ENCODE measurements at regions of chr6 and their contacts with region 1.

Region 1: DNA sequence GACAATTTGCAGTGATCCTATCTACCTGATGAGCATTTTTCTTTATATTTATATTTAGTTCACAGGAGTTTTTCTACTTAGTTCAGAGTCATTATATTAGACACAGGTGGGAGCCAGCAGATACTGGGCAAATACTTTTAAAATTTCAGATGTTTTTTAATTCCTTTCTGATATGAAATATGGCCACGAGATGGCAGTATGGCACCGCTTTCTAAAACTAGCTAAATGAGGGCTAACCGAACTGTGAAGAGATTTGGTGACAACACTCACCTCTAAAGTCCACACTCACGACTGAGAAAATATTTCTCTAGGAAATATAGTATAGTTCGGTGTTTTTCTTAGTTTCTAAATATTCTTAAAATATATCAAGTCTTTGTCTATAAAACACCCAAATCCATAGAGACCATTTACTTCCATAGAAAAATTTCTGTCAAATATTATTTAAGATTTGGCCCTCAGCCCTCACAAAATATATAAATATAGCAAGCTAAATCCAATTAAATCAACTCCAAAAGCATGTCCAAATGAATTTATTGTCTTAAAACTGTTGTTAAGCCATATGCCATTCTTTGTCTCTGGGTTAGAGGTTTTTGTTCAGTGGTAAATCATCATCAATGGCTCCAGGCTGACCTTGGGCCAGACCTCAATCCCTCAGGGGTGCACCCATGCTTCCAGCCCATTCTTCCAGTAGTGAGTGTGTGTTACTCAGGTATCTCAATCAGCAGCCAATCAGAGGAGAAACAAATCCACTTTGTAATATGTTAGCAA is 63.6 kb downstream of the HUS1B start:
- DNase-seq: no peak
- H3K4me3 ChIP-seq: no peak overlapping the region
- H3K27ac ChIP-seq: peak overlapping the region; percentile 58 to 66 (median 64)
- H3K4me1 ChIP-seq: peaks cover 0 to 9% (median 0%) of the 10 kb centered on the region in 4 donors
- H3K27me3 ChIP-seq: no peaks in the 10 kb centered on the region
- CTCF ChIP-seq: peak in 3 of 4 experiments; percentile 54 to 69 (median 63)
- EP300 ChIP-seq: no peak
- POLR2A ChIP-seq: no peak

Region 2: GRCh38 chr6:692855-693722 is 99.8 kb after region 1 on chr6 and contains the start of gene EXOC2:
- intact Hi-C with region 1: loop called (anchors 5 kb)
- DNase-seq: peak; percentile 91
- H3K4me3 ChIP-seq: peak within 1 kb of the TSS; percentile 80 to 98 (median 90)
- H3K27ac ChIP-seq: peak within 1 kb of the TSS; percentile 81 to 90 (median 86)
- H3K4me1 ChIP-seq: peaks cover 0 to 28% (median 23%) of the 10 kb centered on the region in 4 donors
- H3K27me3 ChIP-seq: no peaks in the 10 kb centered on the region
- CTCF ChIP-seq: no peak
- EP300 ChIP-seq: no peak
- POLR2A ChIP-seq: peak; percentile 38 to 42
- total RNA-seq, gene EXOC2: 15.3 to 23.2 (median 19.1) TPM

Region 3: GRCh38 chr6:723540-723939 is 130.2 kb after region 1 on chr6:
- intact Hi-C with region 1: no loop called
- DNase-seq: no peak
- H3K4me3 ChIP-seq: no peak overlapping the region
- H3K27ac ChIP-seq: no peak overlapping the region
- H3K4me1 ChIP-seq: no peaks in the 10 kb centered on the region
- H3K27me3 ChIP-seq: peaks cover 0 to 3% (median 0%) of the 10 kb centered on the region in 3 donors
- CTCF ChIP-seq: no peak
- EP300 ChIP-seq: no peak
- POLR2A ChIP-seq: no peak

Region 4: GRCh38 chr6:797479-798077 is 204.3 kb after region 1 on chr6:
- intact Hi-C with region 1: loop called (anchors 5 kb)
- DNase-seq: no peak
- H3K4me3 ChIP-seq: no peak overlapping the region
- H3K27ac ChIP-seq: no peak overlapping the region
- H3K4me1 ChIP-seq: no peaks in the 10 kb centered on the region
- H3K27me3 ChIP-seq: peaks cover 3 to 25% (median 9%) of the 10 kb centered on the region in 3 donors
- CTCF ChIP-seq: peak; percentile 32 to 78 (median 73)
- EP300 ChIP-seq: no peak
- POLR2A ChIP-seq: no peak

Region 5: GRCh38 chr6:815348-815738 is 222.0 kb after region 1 on chr6:
- intact Hi-C with region 1: no loop called
- DNase-seq: no peak
- H3K4me3 ChIP-seq: no peak overlapping the region
- H3K27ac ChIP-seq: peak overlapping the region in 1 of 4 donors; percentile 74
- H3K4me1 ChIP-seq: no peaks in the 10 kb centered on the region
- H3K27me3 ChIP-seq: no peaks in the 10 kb centered on the region
- CTCF ChIP-seq: no peak
- EP300 ChIP-seq: no peak
- POLR2A ChIP-seq: no peak

Region 6: GRCh38 chr6:1396952-1397868 is 803.9 kb after region 1 on chr6:
- intact Hi-C with region 1: loop called (anchors 2 kb)
- DNase-seq: peak; percentile 89
- H3K4me3 ChIP-seq: peak overlapping the region in 1 of 4 donors; percentile 68
- H3K27ac ChIP-seq: peak overlapping the region; percentile 84 to 96 (median 89)
- H3K4me1 ChIP-seq: peaks cover 0 to 24% (median 13%) of the 10 kb centered on the region in 4 donors
- H3K27me3 ChIP-seq: peaks cover 0 to 65% (median 20%) of the 10 kb centered on the region in 3 donors
- CTCF ChIP-seq: peak; percentile 75 to 93 (median 89)
- EP300 ChIP-seq: peak in 3 of 4 donors; percentile 66 to 92 (median 88)
- POLR2A ChIP-seq: no peak

Region 7: GRCh38 chr6:1436334-1437306 is 843.3 kb after region 1 on chr6:
- intact Hi-C with region 1: loop called (anchors 2 kb)
- DNase-seq: no peak
- H3K4me3 ChIP-seq: no peak overlapping the region
- H3K27ac ChIP-seq: no peak overlapping the region
- H3K4me1 ChIP-seq: peaks cover 0 to 7% (median 6%) of the 10 kb centered on the region in 4 donors
- H3K27me3 ChIP-seq: peaks cover 0 to 19% (median 0%) of the 10 kb centered on the region in 3 donors
- CTCF ChIP-seq: peak in 3 of 4 experiments; percentile 71 to 80 (median 73)
- EP300 ChIP-seq: no peak
- POLR2A ChIP-seq: no peak